Endothelial cell of umbilical vein (primary cell): ENCODE measurements at regions of chr9 and their contacts with region 1.

Region 1: GRCh38 chr9:72997387-72997995 is 44.6 kb upstream of the ALDH1A1 start:
- DNase-seq: peak; percentile 89
- H3K4me3 ChIP-seq: peak overlapping the region in 2 of 3 experiments; percentile 17 to 57
- H3K27ac ChIP-seq: peak overlapping the region; percentile 100
- H3K4me1 ChIP-seq: peaks cover 38% of the 10 kb centered on the region
- H3K27me3 ChIP-seq: no peaks in the 10 kb centered on the region
- CTCF ChIP-seq: no peak
- POLR2A ChIP-seq: peak; percentile 71

Region 2: DNA sequence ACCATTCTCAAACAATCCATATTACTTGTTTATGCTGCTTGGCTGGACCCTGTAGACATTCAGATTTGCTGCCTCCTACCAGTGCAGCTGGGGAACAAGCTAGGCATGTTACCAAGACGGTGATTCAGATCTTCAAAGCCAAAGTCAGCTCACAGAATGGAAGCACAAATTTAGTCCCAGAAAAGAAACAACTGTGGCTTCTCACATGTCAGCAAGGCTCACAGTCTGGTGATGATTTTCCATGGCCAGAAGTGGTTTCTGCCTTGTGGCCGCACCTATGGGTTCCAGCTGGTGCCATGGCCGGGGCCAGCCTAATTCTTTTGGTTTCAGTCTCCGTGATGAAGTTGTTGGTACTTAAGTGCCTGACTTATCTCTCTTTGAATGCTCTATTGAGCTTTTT is 293.9 kb before region 1 on chr9:
- CTCF ChIA-PET with region 1: no interaction called
- POLR2A ChIA-PET with region 1: no interaction called
- dilution Hi-C with region 1: no loop called
- intact Hi-C with region 1: no loop called
- DNase-seq: no peak
- H3K4me3 ChIP-seq: no peak overlapping the region
- H3K27ac ChIP-seq: no peak overlapping the region
- H3K4me1 ChIP-seq: no peaks in the 10 kb centered on the region
- H3K27me3 ChIP-seq: peaks cover 0 to 4% of the 10 kb centered on the region in 2 experiments
- CTCF ChIP-seq: no peak
- POLR2A ChIP-seq: no peak

Region 3: DNA sequence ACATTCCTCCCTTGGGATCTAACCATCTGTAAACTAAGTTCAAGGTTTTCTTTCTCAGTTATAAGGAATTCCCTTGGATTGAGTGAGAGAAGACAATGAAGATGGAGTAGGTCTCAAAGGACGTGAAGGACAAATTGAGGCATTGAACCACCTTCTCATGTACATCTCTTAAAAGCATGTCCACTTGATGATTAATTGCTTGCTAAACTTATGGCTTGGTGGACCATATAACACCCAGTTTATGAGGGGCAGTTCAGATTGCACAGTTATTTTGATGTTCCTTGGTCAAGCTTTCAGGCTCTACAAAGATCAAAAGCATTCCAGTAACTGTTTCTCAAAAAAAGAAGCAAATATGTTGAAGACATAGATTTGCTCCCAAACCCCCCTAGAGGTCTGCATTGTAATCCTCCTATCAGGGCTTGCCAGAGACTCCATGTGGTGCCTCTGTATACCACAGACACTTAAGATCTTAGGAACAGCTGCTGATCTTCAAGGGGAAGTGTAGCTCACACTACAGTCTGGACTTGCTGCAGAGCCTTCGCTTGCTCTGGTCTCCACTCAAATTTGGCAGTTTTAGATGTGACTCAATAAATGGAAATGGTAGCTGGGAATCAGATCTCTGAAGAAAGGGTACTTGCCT is 12.3 kb after region 1 on chr9:
- CTCF ChIA-PET with region 1: interaction called, 4 read pairs
- POLR2A ChIA-PET with region 1: no interaction called
- dilution Hi-C with region 1: no loop called
- intact Hi-C with region 1: loop called (anchors 1 kb)
- DNase-seq: no peak
- H3K4me3 ChIP-seq: no peak overlapping the region
- H3K27ac ChIP-seq: no peak overlapping the region
- H3K4me1 ChIP-seq: peaks cover 38% of the 10 kb centered on the region
- H3K27me3 ChIP-seq: no peaks in the 10 kb centered on the region
- CTCF ChIP-seq: no peak
- POLR2A ChIP-seq: no peak

Region 4: GRCh38 chr9:73073337-73074175 is 76.1 kb after region 1 on chr9:
- CTCF ChIA-PET with region 1: no interaction called
- POLR2A ChIA-PET with region 1: no interaction called
- dilution Hi-C with region 1: no loop called
- intact Hi-C with region 1: loop called (anchors 1 kb)
- DNase-seq: no peak
- H3K4me3 ChIP-seq: no peak overlapping the region
- H3K27ac ChIP-seq: peak overlapping the region; percentile 82
- H3K4me1 ChIP-seq: peaks cover 20% of the 10 kb centered on the region
- H3K27me3 ChIP-seq: no peaks in the 10 kb centered on the region
- CTCF ChIP-seq: no peak
- POLR2A ChIP-seq: no peak

Region 5: GRCh38 chr9:73149371-73150067 is 152.0 kb after region 1 on chr9:
- CTCF ChIA-PET with region 1: no interaction called
- POLR2A ChIA-PET with region 1: no interaction called
- dilution Hi-C with region 1: no loop called
- intact Hi-C with region 1: loop called (anchors 2 kb)
- DNase-seq: peak; percentile 88
- H3K4me3 ChIP-seq: peak overlapping the region in 1 of 3 experiments; percentile 23
- H3K27ac ChIP-seq: peak overlapping the region; percentile 77
- H3K4me1 ChIP-seq: peaks cover 44% of the 10 kb centered on the region
- H3K27me3 ChIP-seq: no peaks in the 10 kb centered on the region
- CTCF ChIP-seq: no peak
- POLR2A ChIP-seq: no peak